Activated CD4-positive, alpha-beta memory T cell treated with anti-CD3 and anti-CD28 coated beads for 36 hours (primary cell): ENCODE measurements at regions of chr3 and their contacts with region 1.

Region 1: GRCh38 chr3:157136647-157137387 is 23.1 kb downstream of the CCNL1 start:
- DNase-seq: no peak
- H3K4me3 Mint-ChIP-seq: no peak overlapping the region
- H3K27ac Mint-ChIP-seq: no peak overlapping the region
- H3K4me1 Mint-ChIP-seq: peaks cover 40% of the 10 kb centered on the region
- H3K27me3 Mint-ChIP-seq: no peaks in the 10 kb centered on the region

Region 2: GRCh38 chr3:156040041-156040440 is 1096.8 kb before region 1 on chr3:
- CTCF ChIA-PET with region 1: interaction called, 5 read pairs
- POLR2A ChIA-PET with region 1: no interaction called
- intact Hi-C with region 1: loop called (anchors 5 kb)
- DNase-seq: no peak
- H3K4me3 Mint-ChIP-seq: no peak overlapping the region
- H3K27ac Mint-ChIP-seq: no peak overlapping the region
- H3K4me1 Mint-ChIP-seq: peaks cover 2% of the 10 kb centered on the region
- H3K27me3 Mint-ChIP-seq: peaks cover 3% of the 10 kb centered on the region

Region 3: GRCh38 chr3:156509189-156510174 is 627.3 kb before region 1 on chr3:
- CTCF ChIA-PET with region 1: interaction called, 16 read pairs
- POLR2A ChIA-PET with region 1: no interaction called
- intact Hi-C with region 1: no loop called
- DNase-seq: no peak
- H3K4me3 Mint-ChIP-seq: no peak overlapping the region
- H3K27ac Mint-ChIP-seq: no peak overlapping the region
- H3K4me1 Mint-ChIP-seq: peaks cover 13% of the 10 kb centered on the region
- H3K27me3 Mint-ChIP-seq: peaks cover 1% of the 10 kb centered on the region

Region 4: DNA sequence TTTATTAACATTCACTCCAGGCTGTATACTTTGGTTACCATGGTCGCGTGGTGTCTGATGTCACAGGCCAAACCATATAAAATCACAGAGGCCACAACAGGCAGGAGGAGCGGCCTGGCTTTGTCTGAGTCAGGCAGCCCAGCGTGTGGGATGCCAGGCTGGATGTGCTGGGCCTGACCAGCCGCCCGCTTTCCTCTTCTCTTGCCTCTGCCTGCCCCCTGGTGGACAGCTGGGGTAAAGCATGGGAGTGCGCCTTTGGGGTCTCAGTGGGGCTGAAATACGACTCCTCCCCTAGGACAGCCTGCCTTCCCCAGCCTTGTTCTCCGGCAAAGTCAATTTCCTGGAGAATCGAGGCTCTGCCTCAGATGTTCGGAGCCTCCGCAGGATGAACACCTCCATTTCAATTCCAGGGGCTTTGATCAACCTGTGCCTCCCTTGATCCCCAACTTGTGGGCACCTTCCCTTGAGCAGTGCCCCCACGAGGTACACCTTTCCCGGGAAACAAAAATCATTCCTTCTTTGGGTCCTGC is 55.1 kb before region 1 on chr3:
- CTCF ChIA-PET with region 1: interaction called, 53 read pairs
- POLR2A ChIA-PET with region 1: no interaction called
- intact Hi-C with region 1: no loop called
- DNase-seq: peak; percentile 90
- H3K4me3 Mint-ChIP-seq: no peak overlapping the region
- H3K27ac Mint-ChIP-seq: no peak overlapping the region
- H3K4me1 Mint-ChIP-seq: peaks cover 31% of the 10 kb centered on the region
- H3K27me3 Mint-ChIP-seq: no peaks in the 10 kb centered on the region

Region 5: GRCh38 chr3:157104928-157105652 is 31.7 kb before region 1 on chr3:
- CTCF ChIA-PET with region 1: interaction called, 12 read pairs
- POLR2A ChIA-PET with region 1: no interaction called
- intact Hi-C with region 1: no loop called
- DNase-seq: no peak
- H3K4me3 Mint-ChIP-seq: no peak overlapping the region
- H3K27ac Mint-ChIP-seq: no peak overlapping the region
- H3K4me1 Mint-ChIP-seq: peaks cover 32% of the 10 kb centered on the region
- H3K27me3 Mint-ChIP-seq: no peaks in the 10 kb centered on the region